Dorsolateral prefrontal cortex (tissue), 120 donors: ENCODE measurements at regions of chr17 and their contacts with region 1.

Region 1: DNA sequence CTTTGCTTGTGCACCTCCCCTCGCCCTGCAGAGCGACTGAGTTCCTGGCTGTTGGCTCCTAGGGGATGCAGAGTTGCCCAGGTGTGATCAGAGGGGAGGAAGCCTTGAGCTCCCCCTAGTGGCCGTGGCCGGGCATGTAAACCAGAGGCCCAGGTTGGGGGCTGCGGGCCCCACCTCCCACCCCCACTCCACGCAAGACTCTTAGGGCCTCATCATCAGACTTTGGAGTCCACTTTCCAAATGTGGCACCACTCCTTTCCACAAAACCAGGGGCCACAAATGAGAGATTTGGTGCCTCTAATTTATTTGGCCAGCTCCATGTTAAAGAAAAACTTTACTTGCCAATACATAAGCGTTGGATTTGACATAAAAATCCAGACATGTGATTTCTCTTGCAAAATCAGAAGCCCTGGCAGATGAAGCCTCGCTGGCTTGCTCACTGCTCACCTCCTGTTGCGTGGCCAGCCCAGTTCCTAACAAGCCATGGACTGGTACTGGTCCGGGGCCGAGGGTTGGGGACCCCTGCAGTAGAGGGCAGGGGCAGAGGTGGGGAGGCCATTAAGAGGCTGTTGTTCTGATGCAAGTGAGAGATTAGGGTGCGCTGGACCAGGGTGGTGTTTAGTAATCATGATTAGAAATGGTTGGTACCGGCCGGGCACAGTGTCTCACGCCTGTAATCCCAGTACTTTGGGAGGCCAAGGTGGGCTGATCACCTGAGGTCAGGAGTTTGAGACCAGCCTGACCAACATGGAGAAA is 28.7 kb upstream of the GAS7 start:
- DNase-seq: peak in 8 of 10 donors; percentile 46 to 68 (median 50)
- H3K4me3 ChIP-seq: no peak overlapping the region
- H3K27ac ChIP-seq: peak overlapping the region in 3 of 59 donors; percentile 3 to 84 (median 18)
- H3K27me3 ChIP-seq: no peaks in the 10 kb centered on the region
- CTCF ChIP-seq: peak; percentile 47 to 95 (median 83)

Region 2: DNA sequence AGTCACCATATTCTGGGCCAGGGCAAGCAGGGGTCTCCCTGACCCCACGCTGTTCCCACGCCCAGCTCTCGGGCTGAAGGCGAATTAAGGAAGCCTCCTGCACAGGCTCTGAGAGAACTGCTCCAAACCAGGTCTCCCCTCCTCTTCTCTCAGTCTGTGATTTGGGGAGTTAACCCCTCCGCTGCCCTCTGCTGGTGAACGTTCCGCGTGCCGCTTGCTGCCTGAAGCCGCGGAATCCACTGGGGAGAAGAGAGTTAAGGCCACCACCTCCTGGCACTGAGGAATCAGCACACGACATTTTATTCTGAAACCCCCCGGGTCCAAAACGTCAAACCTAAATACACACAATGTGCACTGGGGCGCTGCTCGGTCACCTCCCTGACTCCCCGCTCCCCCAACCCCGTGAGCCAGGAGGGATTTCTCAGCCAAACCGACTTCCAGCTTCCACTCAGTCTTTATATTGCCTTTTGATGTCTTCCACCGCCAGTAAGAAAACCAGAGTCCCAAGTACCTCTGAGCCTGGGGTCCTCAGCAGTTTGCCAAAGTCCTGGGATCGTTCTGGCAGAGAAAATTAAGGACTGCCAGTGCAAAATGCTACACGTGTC is 267.6 kb before region 1 on chr17:
- intact Hi-C with region 1: loop called in 1 of 2 experiments (anchors 10 kb)
- DNase-seq: peak in 9 of 10 donors; percentile 44 to 94 (median 65)
- H3K4me3 ChIP-seq: peak overlapping the region in 57 of 59 donors; percentile 10 to 63 (median 47)
- H3K27ac ChIP-seq: peak overlapping the region in 34 of 59 donors; percentile 3 to 89 (median 38)
- H3K27me3 ChIP-seq: no peaks in the 10 kb centered on the region
- CTCF ChIP-seq: peak in 51 of 56 donors; percentile 22 to 63 (median 49)

Region 3: GRCh38 chr17:9968902-9969617 is 258.0 kb before region 1 on chr17:
- intact Hi-C with region 1: loop called in 1 of 2 experiments (anchors 5 kb)
- DNase-seq: no peak
- H3K4me3 ChIP-seq: no peak overlapping the region
- H3K27ac ChIP-seq: peak overlapping the region in 22 of 59 donors; percentile 7 to 69 (median 44)
- H3K27me3 ChIP-seq: no peaks in the 10 kb centered on the region
- CTCF ChIP-seq: no peak

Region 4: DNA sequence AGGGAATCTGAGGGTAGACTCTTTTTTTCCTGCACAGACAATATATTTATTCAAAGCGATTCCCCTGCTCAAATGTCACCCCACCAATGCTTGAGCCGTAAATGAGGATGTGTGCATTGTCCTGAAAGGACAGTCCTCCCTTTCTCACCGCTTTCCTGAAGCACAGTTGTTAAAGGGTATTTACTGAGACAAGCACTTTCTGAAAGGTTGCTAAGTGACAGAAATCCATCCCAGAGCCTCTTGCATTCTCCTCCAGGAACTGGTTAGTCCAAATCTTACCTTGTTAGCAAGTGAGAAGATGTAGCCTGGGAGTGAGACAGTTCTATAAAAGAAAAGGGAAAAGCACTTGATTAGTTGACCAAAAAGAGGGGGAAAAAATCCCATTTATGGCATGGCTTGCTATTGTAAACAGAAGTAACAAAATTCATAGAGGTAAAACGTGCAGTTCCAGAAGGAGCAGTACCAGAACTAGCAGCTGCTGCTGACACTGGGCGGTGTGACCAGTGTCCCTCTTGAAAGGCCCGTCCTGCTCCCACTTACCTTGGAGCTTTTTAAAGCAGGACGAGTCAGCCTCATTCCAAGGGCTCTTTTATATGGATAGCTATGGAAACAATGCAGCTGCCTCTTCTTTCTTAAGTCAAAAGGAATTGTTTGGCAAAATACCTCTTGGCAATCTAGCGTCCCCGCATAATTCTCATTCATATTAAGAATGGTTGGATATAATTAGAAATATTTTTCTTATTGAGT is 322.2 kb after region 1 on chr17 and contains the start of gene MYH2:
- intact Hi-C with region 1: no loop called
- DNase-seq: no peak
- H3K4me3 ChIP-seq: no peak within 1 kb of the TSS
- H3K27ac ChIP-seq: no peak within 1 kb of the TSS
- H3K27me3 ChIP-seq: peaks cover 0 to 19% (median 0%) of the 10 kb centered on the region in 45 donors
- CTCF ChIP-seq: no peak
- total RNA-seq, gene MYH2: not detected